Panc1 (cell line): ENCODE measurements at regions of chr9 and their contacts with region 1.

Region 1: DNA sequence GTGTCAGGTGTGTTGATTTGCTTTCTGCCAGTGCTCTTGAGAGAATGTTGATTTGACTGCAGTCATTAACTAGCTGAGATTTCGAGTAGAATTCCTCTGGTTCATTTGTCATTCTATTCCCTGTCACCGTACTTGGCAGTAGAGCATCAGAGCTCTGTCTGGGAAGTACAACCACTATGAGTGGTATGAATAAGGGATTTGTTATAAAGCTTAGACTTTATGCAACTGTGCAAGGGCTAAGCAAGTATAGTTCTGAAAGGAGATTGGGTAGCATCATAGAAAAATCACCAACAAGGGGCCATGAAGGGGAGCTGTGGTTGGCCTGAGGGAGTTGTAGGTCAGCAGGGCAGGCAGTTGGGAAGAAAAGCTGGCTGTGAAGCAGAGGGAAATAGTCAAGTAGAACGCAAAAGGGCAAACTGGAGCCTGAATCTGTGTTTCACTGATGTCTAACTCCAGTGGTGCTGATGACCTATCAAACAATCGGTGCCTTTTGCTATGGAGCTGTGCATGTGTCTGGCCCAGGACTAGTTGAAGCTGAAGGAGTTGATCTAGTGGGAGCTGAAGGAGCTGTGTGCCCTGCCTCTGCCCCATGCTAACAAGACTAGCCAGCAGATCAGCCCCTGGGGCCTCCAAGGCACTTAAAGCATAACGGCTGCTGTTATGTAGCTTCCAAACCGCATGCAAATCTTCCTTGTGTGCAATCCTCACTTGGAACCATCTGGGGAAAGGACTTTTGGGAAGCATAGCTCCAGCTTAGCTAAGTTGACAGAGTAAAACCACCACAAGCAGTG is 110.0 kb downstream of the SLC28A3 start:
- DNase-seq: no peak
- ATAC-seq: no peak
- H3K4me3 ChIP-seq: no peak overlapping the region
- H3K27ac ChIP-seq: no peak overlapping the region
- H3K4me1 ChIP-seq: no peaks in the 10 kb centered on the region
- H3K27me3 ChIP-seq: no peaks in the 10 kb centered on the region
- CTCF ChIP-seq: no peak

Region 2: DNA sequence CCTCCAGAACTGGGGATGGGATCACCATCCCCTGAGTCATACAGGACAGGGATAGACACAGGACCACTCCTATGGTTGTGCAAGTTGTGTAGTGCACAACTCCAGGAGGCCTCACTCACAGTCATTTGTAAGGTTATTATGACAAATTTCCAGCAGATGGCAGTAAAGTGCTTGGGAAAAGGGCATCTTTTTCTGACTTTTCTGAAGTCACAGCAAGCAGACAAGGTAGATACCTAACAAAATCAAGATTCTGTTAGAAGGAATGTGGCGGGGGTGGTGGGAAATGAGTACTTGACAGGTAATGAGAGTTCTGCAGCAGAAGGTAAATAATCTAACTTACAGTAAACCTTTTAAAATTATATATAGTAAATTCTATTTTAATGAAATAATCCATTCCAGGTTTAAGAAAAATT is 292.6 kb before region 1 on chr9:
- CTCF ChIA-PET with region 1: no interaction called
- POLR2A ChIA-PET with region 1: no interaction called
- in situ Hi-C with region 1: no loop called
- intact Hi-C with region 1: no loop called
- DNase-seq: no peak
- ATAC-seq: peak; percentile 81
- H3K4me3 ChIP-seq: no peak overlapping the region
- H3K27ac ChIP-seq: no peak overlapping the region
- H3K4me1 ChIP-seq: no peaks in the 10 kb centered on the region
- H3K27me3 ChIP-seq: no peaks in the 10 kb centered on the region
- CTCF ChIP-seq: peak; percentile 68

Region 3: DNA sequence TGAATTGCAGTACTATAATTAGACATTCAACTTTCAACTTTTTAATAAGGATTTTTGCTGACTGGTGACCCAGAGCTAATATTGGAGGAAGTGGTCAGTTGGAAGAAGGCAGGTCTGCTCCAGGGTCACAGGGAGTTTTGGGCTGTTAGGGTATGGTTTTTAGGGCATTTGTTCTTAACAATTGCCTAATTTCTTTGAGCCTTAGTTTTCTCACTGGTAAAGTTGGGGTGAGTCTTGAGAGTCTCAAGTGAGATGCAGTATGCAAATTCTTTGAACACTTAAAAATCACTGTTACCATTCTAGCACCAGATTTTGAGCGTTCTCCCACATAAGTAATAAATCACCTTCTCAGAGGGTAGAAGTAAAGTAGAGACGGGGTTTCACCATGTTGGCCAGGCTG is 199.0 kb before region 1 on chr9:
- CTCF ChIA-PET with region 1: no interaction called
- POLR2A ChIA-PET with region 1: no interaction called
- in situ Hi-C with region 1: no loop called
- intact Hi-C with region 1: no loop called
- DNase-seq: no peak
- ATAC-seq: no peak
- H3K4me3 ChIP-seq: no peak overlapping the region
- H3K27ac ChIP-seq: no peak overlapping the region
- H3K4me1 ChIP-seq: no peaks in the 10 kb centered on the region
- H3K27me3 ChIP-seq: no peaks in the 10 kb centered on the region
- CTCF ChIP-seq: no peak

Region 4: GRCh38 chr9:84057662-84058061 is 172.9 kb before region 1 on chr9:
- CTCF ChIA-PET with region 1: no interaction called
- POLR2A ChIA-PET with region 1: interaction called, 10 read pairs
- in situ Hi-C with region 1: no loop called
- intact Hi-C with region 1: no loop called
- DNase-seq: no peak
- ATAC-seq: no peak
- H3K4me3 ChIP-seq: no peak overlapping the region
- H3K27ac ChIP-seq: no peak overlapping the region
- H3K4me1 ChIP-seq: no peaks in the 10 kb centered on the region
- H3K27me3 ChIP-seq: peaks cover 2% of the 10 kb centered on the region; the same call in 1 of the 2 replicates
- CTCF ChIP-seq: no peak

Region 5: GRCh38 chr9:84261082-84261746 is 30.7 kb after region 1 on chr9:
- CTCF ChIA-PET with region 1: no interaction called
- POLR2A ChIA-PET with region 1: interaction called, 10 read pairs
- in situ Hi-C with region 1: no loop called
- intact Hi-C with region 1: no loop called
- DNase-seq: peak; percentile 59
- ATAC-seq: peak; percentile 98
- H3K4me3 ChIP-seq: no peak overlapping the region
- H3K27ac ChIP-seq: no peak overlapping the region
- H3K4me1 ChIP-seq: no peaks in the 10 kb centered on the region
- H3K27me3 ChIP-seq: peaks cover 5% of the 10 kb centered on the region
- CTCF ChIP-seq: peak; percentile 86